ENCODE measurements at regions of chr9 and their contacts with region 1.

Region 1: GRCh38 chr9:132240753-132241493 is 79.1 kb downstream of the NTNG2 start:
- H3K4me3 ChIP-seq: peak overlapping the region; percentile 50
- H3K27ac ChIP-seq: no peak overlapping the region
- H3K4me1 ChIP-seq: peaks cover 2% of the 10 kb centered on the region; the same call in 1 of the 2 replicates
- CTCF ChIP-seq: peak; percentile 10; the same call in 1 of the 2 replicates

Region 2: GRCh38 chr9:131762356-131762932 is 478.5 kb before region 1 on chr9:
- CTCF ChIA-PET with region 1: interaction called, 148 read pairs
- POLR2A ChIA-PET with region 1: interaction called, 3 read pairs
- H3K4me3 ChIP-seq: no peak overlapping the region
- H3K27ac ChIP-seq: no peak overlapping the region
- H3K4me1 ChIP-seq: no peaks in the 10 kb centered on the region
- CTCF ChIP-seq: peak; percentile 99

Region 3: GRCh38 chr9:132160802-132161742 is 79.9 kb before region 1 on chr9:
- CTCF ChIA-PET with region 1: interaction called, 382 read pairs
- POLR2A ChIA-PET with region 1: interaction called, 4 read pairs
- H3K4me3 ChIP-seq: peak overlapping the region; percentile 55
- H3K27ac ChIP-seq: 0 out of 2 replicates have a peak overlapping the region, but pooled peaks have one; percentile 16
- H3K4me1 ChIP-seq: no peaks in the 10 kb centered on the region; the same call in 1 of the 2 replicates
- CTCF ChIP-seq: no peak

Region 4: GRCh38 chr9:132176338-132176737 is 64.6 kb before region 1 on chr9:
- CTCF ChIA-PET with region 1: interaction called, 382 read pairs
- POLR2A ChIA-PET with region 1: no interaction called
- H3K4me3 ChIP-seq: no peak overlapping the region
- H3K27ac ChIP-seq: no peak overlapping the region
- H3K4me1 ChIP-seq: no peaks in the 10 kb centered on the region
- CTCF ChIP-seq: no peak

Region 5: DNA sequence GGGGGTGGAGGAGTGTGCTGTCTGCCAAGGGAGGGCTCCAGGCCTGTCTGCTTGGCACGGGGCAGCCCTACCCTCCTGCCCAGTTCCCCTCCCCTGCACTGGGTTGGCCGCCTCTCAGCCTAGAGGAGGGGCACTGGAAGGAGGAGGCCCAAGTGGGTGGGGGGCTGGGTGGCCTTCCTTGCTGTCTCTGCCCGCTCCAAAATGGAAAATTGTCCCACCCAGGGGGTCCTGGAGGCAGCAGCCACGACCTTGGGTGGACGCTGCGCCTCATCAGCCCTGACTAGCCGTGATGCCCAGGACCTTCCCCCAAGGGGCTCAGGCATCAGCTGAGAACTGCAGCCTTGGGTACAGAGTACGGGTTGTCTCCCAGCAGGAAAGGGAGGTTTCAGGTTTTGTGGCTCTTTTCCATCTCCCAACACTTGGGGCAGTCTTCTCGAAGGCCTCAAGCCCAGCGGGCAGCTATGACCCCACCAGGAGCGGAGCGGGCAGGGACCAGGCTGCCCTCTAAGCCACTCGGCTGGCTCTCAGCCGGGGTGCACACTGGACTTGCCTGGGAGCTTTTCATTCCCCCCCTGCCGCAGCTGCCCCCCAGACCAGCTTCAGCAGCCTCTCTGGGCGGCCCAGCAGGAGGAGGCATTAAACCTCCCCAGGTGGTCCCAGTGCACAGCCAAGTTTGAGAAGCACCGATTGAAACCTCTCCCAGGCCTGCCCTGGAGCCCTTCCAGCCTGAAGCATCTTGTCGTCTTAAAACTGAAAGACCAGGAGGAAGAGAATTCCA is 58.4 kb before region 1 on chr9:
- CTCF ChIA-PET with region 1: interaction called, 34 read pairs
- POLR2A ChIA-PET with region 1: interaction called, 3 read pairs
- H3K4me3 ChIP-seq: no peak overlapping the region
- H3K27ac ChIP-seq: no peak overlapping the region
- H3K4me1 ChIP-seq: no peaks in the 10 kb centered on the region
- CTCF ChIP-seq: peak; percentile 55; the same call in 1 of the 2 replicates

Region 6: DNA sequence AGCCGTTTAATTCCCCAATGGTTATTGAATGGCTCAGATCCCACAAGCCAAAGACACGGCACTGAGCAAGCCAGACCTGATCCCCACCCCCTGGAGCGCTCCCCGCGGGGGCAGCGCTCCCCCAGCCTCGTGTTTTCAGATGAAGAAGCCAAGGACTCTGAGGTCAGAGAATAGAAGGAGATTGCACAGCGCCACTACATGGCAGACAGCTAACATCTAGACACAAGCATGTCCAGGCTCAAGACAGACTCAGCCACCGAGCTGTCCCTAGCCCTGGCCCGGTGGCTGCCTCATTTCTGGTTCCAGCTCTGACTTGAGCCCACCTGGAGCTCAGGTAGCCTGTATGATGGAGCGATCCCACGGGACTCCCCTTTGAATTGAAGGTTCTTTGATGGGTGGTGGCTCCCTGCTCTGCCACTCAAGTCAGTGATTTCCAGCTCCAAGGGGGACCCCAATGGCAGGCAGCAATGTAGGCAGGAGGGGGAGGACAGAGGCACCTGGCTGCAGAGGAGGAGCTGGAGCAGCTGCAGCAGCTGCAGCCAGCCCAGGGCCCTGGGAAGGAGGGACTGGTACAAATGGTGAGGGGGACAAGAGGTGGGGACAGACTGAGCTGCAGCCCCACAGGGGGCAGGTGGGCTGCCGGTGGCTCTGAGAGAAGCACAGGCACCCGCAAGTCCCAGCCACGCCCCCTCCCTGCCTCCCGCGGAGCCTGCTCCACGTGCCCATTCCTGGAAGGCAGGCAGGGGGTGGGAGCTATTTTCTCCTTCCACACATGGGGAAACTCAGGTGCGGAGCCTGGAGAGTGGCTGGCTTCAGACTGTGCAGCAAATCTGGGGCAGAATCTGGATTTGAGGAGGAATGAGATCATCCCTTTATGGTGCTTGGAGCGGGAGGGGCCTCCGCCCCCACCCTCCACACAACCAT is 38.9 kb before region 1 on chr9:
- CTCF ChIA-PET with region 1: interaction called, 13 read pairs
- POLR2A ChIA-PET with region 1: no interaction called
- H3K4me3 ChIP-seq: no peak overlapping the region
- H3K27ac ChIP-seq: no peak overlapping the region
- H3K4me1 ChIP-seq: 0 out of 2 replicates have a peak, but pooled peaks cover 3% of the 10 kb centered on the region
- CTCF ChIP-seq: no peak

Region 7: GRCh38 chr9:132214027-132214622 is 26.8 kb before region 1 on chr9:
- CTCF ChIA-PET with region 1: interaction called, 36 read pairs
- POLR2A ChIA-PET with region 1: interaction called, 5 read pairs
- H3K4me3 ChIP-seq: peak overlapping the region; percentile 29
- H3K27ac ChIP-seq: no peak overlapping the region
- H3K4me1 ChIP-seq: peaks cover 6% of the 10 kb centered on the region; the same call in 1 of the 2 replicates
- CTCF ChIP-seq: no peak

Measured in HEK293 (cell line).